Dorsolateral prefrontal cortex (tissue), 120 donors: ENCODE measurements at regions of chr2 and their contacts with region 1.

Region 1: DNA sequence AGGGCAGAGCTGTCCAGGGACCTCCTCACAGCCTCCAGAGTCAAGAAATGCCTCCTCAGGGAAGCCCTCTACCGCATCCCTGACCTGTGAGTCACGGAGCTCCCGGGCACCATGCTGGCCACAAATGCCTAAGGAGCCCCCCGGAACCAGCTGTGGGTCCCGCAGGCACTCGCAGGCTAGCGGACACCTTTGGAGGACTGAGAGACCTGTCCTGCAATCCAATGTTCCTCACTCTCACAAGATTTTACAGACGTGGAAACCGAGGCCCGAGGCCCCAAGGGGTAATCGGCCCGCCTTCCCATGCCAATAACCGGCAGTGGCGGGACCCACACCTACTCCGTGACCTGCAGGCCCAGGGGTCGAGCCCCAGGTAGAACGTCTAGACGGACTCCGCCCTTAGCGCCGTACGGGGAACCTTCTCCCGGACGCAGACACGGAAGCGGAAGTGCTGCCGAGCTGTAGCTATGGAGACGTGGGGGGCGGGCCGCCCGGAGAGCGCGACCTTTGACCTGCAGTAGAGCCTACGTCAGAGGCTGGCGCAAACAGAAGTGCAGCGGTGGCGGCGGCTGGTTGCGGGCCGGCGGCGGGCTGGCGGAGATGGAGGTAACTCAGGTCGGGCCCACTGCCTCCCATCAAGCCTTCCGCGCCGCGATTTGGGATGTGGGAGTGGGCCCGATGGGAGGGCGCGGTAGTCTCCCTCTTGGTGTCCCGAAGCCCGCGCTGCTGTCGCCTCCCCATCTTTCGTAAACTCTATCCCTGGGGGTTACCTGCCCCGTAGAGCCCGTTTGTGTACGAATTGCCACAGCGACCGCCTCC is at the start of gene GCC2:
- DNase-seq: peak; percentile 83 to 97 (median 96)
- H3K4me3 ChIP-seq: peak within 1 kb of the TSS; percentile 61 to 99 (median 93)
- H3K27ac ChIP-seq: peak within 1 kb of the TSS; percentile 31 to 95 (median 84)
- H3K27me3 ChIP-seq: no peaks in the 10 kb centered on the region
- CTCF ChIP-seq: peak in 13 of 56 donors; percentile 7 to 54 (median 20)
- total RNA-seq, gene GCC2: 60.6 to 126 (median 96.4) TPM

Region 2: DNA sequence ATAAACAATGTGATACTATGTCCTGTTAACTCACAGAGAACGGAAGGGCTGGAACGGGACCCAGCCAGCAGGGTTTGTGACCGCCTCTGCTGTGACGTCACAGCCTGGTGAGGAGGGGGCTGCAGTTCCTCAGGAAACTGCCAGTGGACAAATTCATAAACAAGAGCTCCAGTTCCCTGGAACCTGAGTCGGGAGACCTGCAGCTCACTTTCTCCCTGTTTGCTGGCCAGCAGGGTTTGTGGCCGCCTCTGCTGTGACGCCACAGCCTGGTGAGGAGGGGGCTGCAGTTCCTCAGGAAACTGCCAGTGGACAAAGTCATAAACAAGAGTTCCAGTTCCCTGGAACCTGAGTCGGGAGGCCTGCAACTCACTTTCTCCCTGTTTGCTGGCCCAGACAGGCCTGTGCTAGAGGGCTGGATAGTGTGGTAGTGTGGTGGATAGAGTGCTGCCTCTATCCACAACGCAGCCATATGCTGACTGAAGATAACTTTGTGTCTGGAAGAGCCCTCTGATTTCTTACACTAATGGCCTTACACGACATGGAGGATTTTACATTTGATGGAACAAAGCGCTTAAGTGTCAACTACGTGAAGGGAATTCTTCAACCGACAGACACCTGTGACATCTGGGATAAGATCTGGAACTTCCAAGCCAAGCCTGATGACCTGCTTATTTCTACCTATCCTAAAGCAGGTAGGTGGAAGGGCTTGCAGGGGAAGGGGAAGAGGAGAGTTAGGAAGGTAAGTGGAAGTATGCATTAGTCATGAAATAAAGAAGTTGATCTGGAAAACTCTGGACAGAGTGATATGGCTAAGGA is 70.9 kb before region 1 on chr2 and contains the start of gene SULT1C4:
- intact Hi-C with region 1: no loop called
- DNase-seq: peak in 4 of 10 donors; percentile 16 to 46 (median 33)
- H3K4me3 ChIP-seq: peak within 1 kb of the TSS; percentile 15 to 67 (median 48)
- H3K27ac ChIP-seq: peak within 1 kb of the TSS in 49 of 59 donors; percentile 6 to 89 (median 55)
- H3K27me3 ChIP-seq: no peaks in the 10 kb centered on the region
- CTCF ChIP-seq: no peak
- total RNA-seq, gene SULT1C4: 3.4 to 23.0 (median 10.3) TPM

Region 3: GRCh38 chr2:108533832-108534583 is 85.1 kb after region 1 on chr2 and contains the start of gene LIMS1:
- intact Hi-C with region 1: loop called (anchors 5 to 10 kb)
- DNase-seq: peak; percentile 72 to 90 (median 82)
- H3K4me3 ChIP-seq: peak within 1 kb of the TSS; percentile 49 to 99 (median 85)
- H3K27ac ChIP-seq: peak within 1 kb of the TSS; percentile 49 to 97 (median 87)
- H3K27me3 ChIP-seq: no peaks in the 10 kb centered on the region
- CTCF ChIP-seq: peak in 25 of 56 donors; percentile 3 to 43 (median 19)
- total RNA-seq, gene LIMS1: 11.9 to 38.1 (median 21.9) TPM

Region 4: DNA sequence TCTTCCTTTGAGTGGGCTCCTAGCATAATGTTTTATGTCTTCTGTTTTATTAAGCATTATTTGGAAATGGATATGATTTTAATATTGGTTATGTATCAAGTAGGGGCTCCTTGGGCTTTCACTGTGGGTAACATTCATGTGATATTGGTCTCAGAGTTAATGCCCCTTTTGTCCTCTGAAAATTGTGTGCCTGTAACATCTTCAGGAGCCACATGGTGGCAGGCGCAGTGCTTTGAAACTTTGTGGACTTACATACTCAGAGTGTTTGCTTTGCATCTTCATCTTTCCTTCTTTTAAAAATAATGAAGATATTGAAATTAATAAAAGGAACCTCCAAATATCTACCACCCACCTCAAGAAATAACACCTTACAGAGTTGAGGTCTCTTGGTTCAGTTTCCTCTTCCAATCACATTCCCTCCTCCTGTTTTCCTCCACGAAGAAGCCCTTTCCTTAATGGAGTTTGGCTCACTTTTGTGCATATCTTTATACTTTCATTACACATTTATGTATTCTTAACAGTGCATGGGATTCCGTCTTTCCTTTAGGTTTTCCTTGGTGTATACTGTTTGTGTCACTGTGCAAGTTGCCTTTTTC is 158.9 kb after region 1 on chr2:
- intact Hi-C with region 1: no loop called
- DNase-seq: peak in 6 of 10 donors; percentile 48 to 72 (median 64)
- H3K4me3 ChIP-seq: no peak overlapping the region
- H3K27ac ChIP-seq: no peak overlapping the region
- H3K27me3 ChIP-seq: no peaks in the 10 kb centered on the region
- CTCF ChIP-seq: peak in 55 of 56 donors; percentile 37 to 78 (median 61)